Endothelial cell of umbilical vein (primary cell): ENCODE measurements at regions of chr4 and their contacts with region 1.

Region 1: DNA sequence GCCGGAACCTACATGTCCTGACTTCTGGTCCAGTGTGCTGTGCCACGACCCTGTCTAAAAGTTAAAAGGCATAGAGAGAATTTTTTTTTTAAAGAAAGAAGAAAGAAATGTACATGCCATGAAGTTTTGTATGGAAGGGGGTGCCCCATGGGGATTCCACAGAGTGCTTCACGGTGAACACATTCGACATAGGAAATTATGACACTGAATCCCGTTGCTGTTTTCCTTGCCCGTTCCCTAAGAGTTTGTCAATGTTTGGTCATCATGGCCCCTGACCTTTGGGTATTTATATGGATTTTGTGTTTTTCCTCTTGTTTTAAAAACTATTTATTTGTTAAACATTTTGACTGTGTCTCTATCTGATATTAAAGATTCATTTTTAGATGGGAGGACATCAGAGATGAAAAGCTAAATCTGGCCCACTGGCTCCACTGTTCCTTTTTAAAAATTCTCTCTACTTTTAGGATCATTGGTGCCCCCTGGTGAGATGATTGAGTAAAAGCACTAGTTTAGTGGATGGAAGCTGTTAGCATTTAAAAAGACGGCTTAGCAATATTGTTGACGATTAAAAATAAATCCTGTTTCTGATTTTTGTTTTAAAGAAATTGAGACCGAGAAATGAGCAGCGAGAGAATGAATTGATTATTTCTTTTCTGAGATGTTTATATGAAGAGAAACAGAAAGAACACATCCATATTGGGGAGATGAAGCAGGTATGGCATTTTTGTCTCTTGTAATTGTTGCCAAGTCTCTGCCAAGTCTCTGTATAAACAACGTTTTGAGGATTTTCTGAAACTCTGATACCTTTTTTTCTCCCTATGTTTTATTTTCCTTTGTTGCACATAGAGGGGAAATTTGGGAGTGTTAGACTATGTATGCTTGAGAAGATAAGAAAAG is 75.0 kb downstream of the PTTG2 start:
- DNase-seq: peak; percentile 68
- H3K4me3 ChIP-seq: no peak overlapping the region
- H3K27ac ChIP-seq: peak overlapping the region; percentile 31
- H3K4me1 ChIP-seq: peaks cover 5% of the 10 kb centered on the region
- H3K27me3 ChIP-seq: no peaks in the 10 kb centered on the region
- CTCF ChIP-seq: peak; percentile 49 to 50
- POLR2A ChIP-seq: no peak

Region 2: GRCh38 chr4:37812710-37813109 is 222.5 kb before region 1 on chr4:
- CTCF ChIA-PET with region 1: interaction called, 12 read pairs
- POLR2A ChIA-PET with region 1: no interaction called
- dilution Hi-C with region 1: no loop called
- intact Hi-C with region 1: no loop called
- DNase-seq: peak; percentile 27
- H3K4me3 ChIP-seq: no peak overlapping the region
- H3K27ac ChIP-seq: peak overlapping the region; percentile 29
- H3K4me1 ChIP-seq: peaks cover 13% of the 10 kb centered on the region
- H3K27me3 ChIP-seq: no peaks in the 10 kb centered on the region
- CTCF ChIP-seq: no peak
- POLR2A ChIP-seq: no peak

Region 3: DNA sequence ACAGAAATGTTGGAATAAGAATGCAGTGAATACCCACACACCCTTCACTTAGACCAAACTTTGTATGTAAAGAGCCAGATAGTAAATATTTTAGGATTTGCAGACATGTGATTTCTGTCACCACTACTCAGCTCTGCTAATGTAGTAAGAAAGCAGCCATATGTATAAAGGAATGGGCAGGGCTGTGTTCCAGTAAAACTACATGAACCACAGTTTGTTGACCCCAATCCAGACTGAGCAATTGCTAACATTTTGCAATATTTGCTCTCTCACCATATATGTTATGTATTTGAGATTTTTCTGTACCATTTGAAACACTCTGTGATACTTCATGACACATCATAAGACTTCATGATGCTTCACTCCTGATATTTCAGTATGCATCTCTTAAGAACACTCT is 176.4 kb before region 1 on chr4:
- CTCF ChIA-PET with region 1: interaction called, 12 read pairs
- POLR2A ChIA-PET with region 1: no interaction called
- dilution Hi-C with region 1: no loop called
- intact Hi-C with region 1: no loop called
- DNase-seq: no peak
- H3K4me3 ChIP-seq: no peak overlapping the region
- H3K27ac ChIP-seq: no peak overlapping the region
- H3K4me1 ChIP-seq: no peaks in the 10 kb centered on the region
- H3K27me3 ChIP-seq: no peaks in the 10 kb centered on the region
- CTCF ChIP-seq: no peak
- POLR2A ChIP-seq: no peak

Region 4: GRCh38 chr4:37977471-37978247 is 57.6 kb before region 1 on chr4:
- CTCF ChIA-PET with region 1: interaction called, 11 read pairs
- POLR2A ChIA-PET with region 1: no interaction called
- dilution Hi-C with region 1: no loop called
- intact Hi-C with region 1: loop called (anchors 1 kb)
- DNase-seq: peak; percentile 69
- H3K4me3 ChIP-seq: peak overlapping the region; percentile 21 to 77 (median 74)
- H3K27ac ChIP-seq: peak overlapping the region; percentile 83
- H3K4me1 ChIP-seq: peaks cover 13% of the 10 kb centered on the region
- H3K27me3 ChIP-seq: no peaks in the 10 kb centered on the region
- CTCF ChIP-seq: peak; percentile 52 to 82
- POLR2A ChIP-seq: no peak

Region 5: DNA sequence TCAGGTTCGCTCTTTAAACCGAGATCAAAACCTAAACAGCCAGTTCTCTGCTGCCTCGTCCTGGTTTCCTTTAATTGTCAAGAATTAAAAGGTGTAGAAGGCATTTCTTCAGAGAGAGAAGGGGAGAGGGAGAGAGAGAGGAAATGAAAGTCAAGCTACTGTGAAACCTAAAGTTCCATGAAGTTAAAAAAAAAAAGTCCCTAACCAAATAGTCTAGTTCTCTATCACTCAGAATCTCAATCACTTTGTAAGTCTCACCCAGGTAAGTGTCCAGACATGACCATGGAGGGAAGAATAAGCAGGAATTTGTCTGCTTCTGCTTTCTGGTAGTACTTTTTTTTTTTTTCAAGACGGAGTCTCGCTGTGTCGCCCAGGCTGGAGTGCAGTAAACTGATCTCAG is 1622.2 kb after region 1 on chr4:
- CTCF ChIA-PET with region 1: no interaction called
- POLR2A ChIA-PET with region 1: no interaction called
- dilution Hi-C with region 1: no loop called
- intact Hi-C with region 1: no loop called
- DNase-seq: no peak
- H3K4me3 ChIP-seq: no peak overlapping the region
- H3K27ac ChIP-seq: no peak overlapping the region
- H3K4me1 ChIP-seq: no peaks in the 10 kb centered on the region
- H3K27me3 ChIP-seq: no peaks in the 10 kb centered on the region
- CTCF ChIP-seq: no peak
- POLR2A ChIP-seq: no peak